ENCODE measurements at regions of chr2 and their contacts with region 1.

Region 1: DNA sequence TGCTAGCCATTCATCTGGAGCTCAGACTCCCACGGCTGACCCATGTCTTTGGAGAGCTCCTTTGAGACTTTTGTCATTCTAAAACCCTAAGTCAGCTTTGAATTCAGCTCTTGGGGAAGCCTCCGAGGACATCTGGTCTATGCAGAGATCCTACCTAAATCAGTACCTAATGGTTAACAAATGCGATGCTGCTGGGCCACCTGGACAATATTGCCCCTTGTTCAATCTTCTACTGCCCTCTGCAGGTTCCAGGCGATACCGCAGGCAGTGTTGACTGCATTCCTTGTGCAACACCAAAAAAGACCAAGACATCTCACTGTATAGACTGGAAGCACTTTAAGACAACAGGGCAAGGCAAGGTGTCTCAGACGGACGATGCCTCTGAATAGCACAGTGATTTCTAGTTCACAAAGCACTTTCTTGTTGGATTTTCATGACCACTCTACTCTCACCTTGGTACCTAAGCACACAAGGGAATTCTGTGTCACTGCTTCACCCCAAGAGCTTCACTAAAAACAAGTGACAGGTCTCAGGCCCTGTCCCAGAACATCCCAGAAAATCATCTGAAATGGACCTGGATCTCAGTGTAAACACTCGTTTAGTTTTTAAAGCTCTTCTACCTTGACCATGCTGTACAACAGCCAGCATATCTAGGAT is 80.9 kb downstream of the XDH start:
- DNase-seq: peak in 4 of 5 donors; percentile 33 to 54 (median 39)
- H3K4me3 ChIP-seq: no peak overlapping the region
- H3K27ac ChIP-seq: no peak overlapping the region
- H3K4me1 ChIP-seq: no peaks in the 10 kb centered on the region
- H3K27me3 ChIP-seq: no peaks in the 10 kb centered on the region
- CTCF ChIP-seq: peak in 2 of 3 donors; percentile 16 to 40
- EP300 ChIP-seq: no peak
- POLR2A ChIP-seq: no peak

Region 2: GRCh38 chr2:30747211-30747610 is 586.4 kb before region 1 on chr2:
- intact Hi-C with region 1: loop called in 1 of 4 experiments (anchors 10 kb)
- DNase-seq: no peak
- H3K4me3 ChIP-seq: no peak overlapping the region
- H3K27ac ChIP-seq: no peak overlapping the region
- H3K4me1 ChIP-seq: no peaks in the 10 kb centered on the region
- H3K27me3 ChIP-seq: no peaks in the 10 kb centered on the region
- CTCF ChIP-seq: no peak
- EP300 ChIP-seq: no peak
- POLR2A ChIP-seq: no peak

Region 3: GRCh38 chr2:31049916-31050588 is 283.6 kb before region 1 on chr2:
- intact Hi-C with region 1: no loop called
- DNase-seq: no peak
- H3K4me3 ChIP-seq: no peak overlapping the region
- H3K27ac ChIP-seq: no peak overlapping the region
- H3K4me1 ChIP-seq: no peaks in the 10 kb centered on the region
- H3K27me3 ChIP-seq: no peaks in the 10 kb centered on the region
- CTCF ChIP-seq: no peak
- EP300 ChIP-seq: no peak
- POLR2A ChIP-seq: no peak

Region 4: GRCh38 chr2:31075941-31076590 is 257.6 kb before region 1 on chr2:
- intact Hi-C with region 1: no loop called
- DNase-seq: no peak
- H3K4me3 ChIP-seq: no peak overlapping the region
- H3K27ac ChIP-seq: no peak overlapping the region
- H3K4me1 ChIP-seq: no peaks in the 10 kb centered on the region
- H3K27me3 ChIP-seq: no peaks in the 10 kb centered on the region
- CTCF ChIP-seq: no peak
- EP300 ChIP-seq: no peak
- POLR2A ChIP-seq: no peak

Region 5: DNA sequence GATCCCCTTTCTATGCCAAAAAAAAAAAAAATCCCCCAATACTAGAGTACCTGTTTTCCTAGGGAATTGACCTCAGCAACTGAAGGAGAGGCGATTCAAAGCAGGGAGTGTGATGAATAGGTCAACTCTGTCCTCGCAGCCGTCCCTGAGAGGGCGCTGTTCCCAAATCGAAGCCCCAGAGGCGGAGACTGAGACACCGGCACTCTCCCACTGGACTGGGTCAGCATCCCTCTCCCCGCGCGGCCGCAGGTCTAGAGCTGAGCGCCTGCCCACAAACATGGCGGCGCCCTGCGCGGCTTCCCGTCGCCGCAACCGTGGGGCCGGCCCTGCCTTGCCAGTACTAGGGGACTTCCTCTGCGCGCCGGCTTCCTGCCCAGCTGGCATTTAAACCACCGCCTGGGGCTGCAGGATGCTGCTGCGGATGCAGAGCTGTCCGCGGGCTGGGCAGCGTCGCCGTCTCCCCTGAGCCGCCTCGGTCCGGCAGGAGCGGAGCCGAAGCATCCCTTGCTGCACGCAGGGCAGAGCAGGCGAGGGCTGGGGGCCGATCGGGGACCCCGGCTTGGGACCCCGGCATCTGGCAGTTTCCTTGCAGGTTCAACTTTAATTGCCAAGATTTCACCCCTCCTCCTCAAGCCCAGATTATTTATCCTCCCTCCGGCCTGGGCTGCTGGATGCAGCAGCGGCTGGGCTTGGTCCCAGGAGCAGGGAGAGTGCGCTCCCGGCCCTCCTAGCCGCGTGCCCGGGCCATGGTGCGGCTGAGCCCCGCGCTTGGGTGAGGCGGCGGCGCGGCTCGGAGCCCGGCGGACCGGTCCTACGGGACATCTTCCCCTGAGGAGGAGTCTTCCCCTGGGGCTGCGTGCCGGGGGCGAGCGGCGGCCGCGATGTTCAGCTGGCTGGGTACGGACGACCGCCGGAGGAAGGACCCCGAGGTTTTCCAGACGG is 99.6 kb before region 1 on chr2 and contains the start of gene EHD3:
- intact Hi-C with region 1: loop called in 1 of 4 experiments (anchors 10 kb)
- DNase-seq: peak; percentile 72 to 89 (median 85)
- H3K4me3 ChIP-seq: peak within 1 kb of the TSS; percentile 69
- H3K27ac ChIP-seq: no peak within 1 kb of the TSS
- H3K4me1 ChIP-seq: peaks cover 2% of the 10 kb centered on the region
- H3K27me3 ChIP-seq: no peaks in the 10 kb centered on the region
- CTCF ChIP-seq: peak in 2 of 3 donors; percentile 28 to 58
- EP300 ChIP-seq: no peak
- POLR2A ChIP-seq: no peak
- total RNA-seq, gene EHD3: 2.9 to 5.8 (median 3.5) TPM

Measured in ovary (tissue), 10 donors.